ENCODE measurements at regions of chr17 and their contacts with region 1.

Region 1: DNA sequence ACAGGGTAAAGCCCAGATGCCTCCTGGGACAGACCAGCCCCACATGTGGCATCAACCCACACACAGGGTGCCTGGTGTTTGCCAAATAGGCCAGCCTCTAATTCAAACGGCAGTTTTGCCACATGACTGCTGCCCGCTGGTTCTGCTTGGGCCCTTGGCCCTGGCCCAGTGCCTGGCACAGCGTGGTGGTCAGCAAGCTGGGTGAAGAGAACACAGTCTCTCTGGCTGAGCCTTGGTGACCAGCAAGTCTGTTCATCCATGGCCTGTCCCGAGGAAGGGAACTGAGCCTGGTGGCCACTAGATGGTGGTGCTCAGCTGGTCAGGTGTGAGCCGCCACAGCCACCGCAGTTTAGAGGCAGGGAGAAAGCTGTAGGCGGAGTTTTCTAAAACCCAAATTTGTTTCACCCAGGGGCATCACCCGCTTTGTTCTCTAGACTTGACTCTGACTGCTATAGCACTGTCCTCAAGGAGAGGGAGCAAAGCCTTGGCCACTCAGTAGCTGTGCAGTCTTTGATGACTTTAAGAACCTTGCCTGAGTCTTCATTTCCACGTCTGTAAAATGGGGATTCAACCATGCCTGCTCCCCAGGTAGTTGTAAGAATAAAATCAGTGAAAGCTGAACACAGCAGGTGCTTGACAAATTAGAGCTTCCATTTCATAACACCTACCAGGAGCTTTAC is 4.7 kb upstream of the GFAP start:
- DNase-seq: peak; percentile 92
- CTCF ChIP-seq: peak; percentile 91

Region 2: GRCh38 chr17:45018848-45019711 is 99.1 kb after region 1 on chr17:
- in situ Hi-C with region 1: loop called (anchors 10 kb)
- DNase-seq: peak; percentile 77
- CTCF ChIP-seq: peak; percentile 69